ENCODE measurements at regions of chr6 and their contacts with region 1.

Region 1: GRCh38 chr6:16183187-16183664 is 54.3 kb downstream of the MYLIP start:
- DNase-seq: peak; percentile 10
- H3K4me3 ChIP-seq: no peak overlapping the region
- H3K27ac ChIP-seq: no peak overlapping the region
- H3K27me3 ChIP-seq: peaks cover 11% of the 10 kb centered on the region
- CTCF ChIP-seq: peak; percentile 70

Region 2: GRCh38 chr6:15691250-15691869 is 491.9 kb before region 1 on chr6:
- CTCF ChIA-PET with region 1: interaction called, 92 read pairs
- POLR2A ChIA-PET with region 1: no interaction called
- DNase-seq: peak; percentile 71
- H3K4me3 ChIP-seq: peak overlapping the region; percentile 50
- H3K27ac ChIP-seq: no peak overlapping the region
- H3K27me3 ChIP-seq: peaks cover 6% of the 10 kb centered on the region
- CTCF ChIP-seq: peak; percentile 100

Region 3: GRCh38 chr6:16128759-16129622 is 54.2 kb before region 1 on chr6 and contains the start of gene MYLIP:
- CTCF ChIA-PET with region 1: interaction called, 11 read pairs
- POLR2A ChIA-PET with region 1: no interaction called
- DNase-seq: peak; percentile 59
- H3K4me3 ChIP-seq: peak within 1 kb of the TSS; percentile 76
- H3K27ac ChIP-seq: no peak within 1 kb of the TSS
- H3K27me3 ChIP-seq: peaks cover 22% of the 10 kb centered on the region
- CTCF ChIP-seq: peak; percentile 43
- polyA plus RNA-seq, gene MYLIP: 4.0 and 4.8 TPM in 2 replicates

Region 4: DNA sequence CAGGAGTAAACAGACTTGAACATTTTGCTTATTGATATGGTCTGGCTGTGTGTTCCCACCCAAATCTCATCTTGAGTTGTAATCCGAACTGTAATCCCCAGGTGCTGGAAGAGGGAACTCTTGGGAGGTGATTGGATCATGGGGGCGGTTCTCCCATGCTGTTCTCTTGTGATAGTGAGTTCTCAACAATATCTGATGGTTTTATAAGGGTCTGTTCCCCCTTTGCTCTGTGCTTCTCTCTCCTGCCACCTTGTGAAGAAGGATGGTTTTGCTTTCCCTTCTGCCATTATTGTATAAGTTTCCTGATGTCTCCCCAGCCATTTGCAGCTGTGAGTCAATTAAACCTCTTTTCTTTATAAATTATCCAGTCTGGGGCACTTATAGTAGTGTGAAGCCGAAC is 14.4 kb before region 1 on chr6:
- CTCF ChIA-PET with region 1: interaction called, 14 read pairs
- POLR2A ChIA-PET with region 1: no interaction called
- DNase-seq: no peak
- H3K4me3 ChIP-seq: no peak overlapping the region
- H3K27ac ChIP-seq: no peak overlapping the region
- H3K27me3 ChIP-seq: peaks cover 34% of the 10 kb centered on the region
- CTCF ChIP-seq: peak; percentile 73

Region 5: GRCh38 chr6:16206595-16207037 is 23.4 kb after region 1 on chr6:
- CTCF ChIA-PET with region 1: interaction called, 30 read pairs
- POLR2A ChIA-PET with region 1: no interaction called
- DNase-seq: peak; percentile 55
- H3K4me3 ChIP-seq: no peak overlapping the region
- H3K27ac ChIP-seq: no peak overlapping the region
- H3K27me3 ChIP-seq: no peaks in the 10 kb centered on the region
- CTCF ChIP-seq: peak; percentile 96